Endothelial cell of umbilical vein (primary cell): ENCODE measurements at regions of chr18 and their contacts with region 1.

Region 1: DNA sequence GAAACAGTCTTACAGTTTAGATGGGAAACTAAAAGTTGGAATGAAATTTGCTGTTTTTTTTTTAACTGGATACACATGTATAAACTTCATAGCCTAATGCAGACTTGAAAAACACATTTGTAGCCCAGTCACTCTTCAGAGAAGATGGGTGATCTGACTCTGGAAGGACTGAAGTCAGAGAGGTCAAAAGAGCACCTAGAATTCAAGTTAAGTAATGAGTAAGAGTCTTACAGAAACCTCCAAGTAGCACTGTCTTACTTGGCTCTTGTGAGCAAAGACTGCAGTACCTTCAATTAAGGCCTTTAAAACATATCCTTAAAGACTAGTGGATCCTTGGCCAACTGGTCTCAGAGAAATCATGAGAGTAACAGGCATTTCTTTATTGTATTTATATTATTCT is 41.9 kb downstream of the TRAPPC8 start:
- DNase-seq: no peak
- H3K4me3 ChIP-seq: no peak overlapping the region
- H3K27ac ChIP-seq: no peak overlapping the region
- H3K4me1 ChIP-seq: no peaks in the 10 kb centered on the region
- H3K27me3 ChIP-seq: no peaks in the 10 kb centered on the region
- CTCF ChIP-seq: no peak
- POLR2A ChIP-seq: no peak

Region 2: DNA sequence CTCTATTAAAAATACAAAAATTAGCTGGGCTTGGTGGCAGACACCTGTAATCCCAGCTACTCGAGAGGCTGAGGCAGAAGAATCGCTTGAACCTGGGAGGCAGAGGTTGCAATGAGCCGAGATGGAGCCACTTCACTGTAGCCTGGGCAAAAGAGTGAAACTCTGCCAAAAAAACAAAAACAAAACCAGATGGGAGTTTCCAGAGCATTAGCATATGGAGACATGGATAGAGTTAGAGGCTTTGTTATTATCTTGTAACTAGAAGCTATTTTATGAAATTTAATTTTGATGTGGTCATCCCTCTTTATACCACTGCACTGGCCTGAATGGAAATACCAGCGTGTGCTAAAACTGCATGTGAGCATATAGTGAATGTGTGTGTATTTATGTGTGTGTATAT is 17.0 kb before region 1 on chr18:
- CTCF ChIA-PET with region 1: interaction called, 4 read pairs
- POLR2A ChIA-PET with region 1: no interaction called
- dilution Hi-C with region 1: no loop called
- intact Hi-C with region 1: loop called (anchors 2 kb)
- DNase-seq: no peak
- H3K4me3 ChIP-seq: no peak overlapping the region
- H3K27ac ChIP-seq: no peak overlapping the region
- H3K4me1 ChIP-seq: no peaks in the 10 kb centered on the region
- H3K27me3 ChIP-seq: no peaks in the 10 kb centered on the region
- CTCF ChIP-seq: no peak
- POLR2A ChIP-seq: no peak